ENCODE measurements at regions of chr5 and their contacts with region 1.

Region 1: DNA sequence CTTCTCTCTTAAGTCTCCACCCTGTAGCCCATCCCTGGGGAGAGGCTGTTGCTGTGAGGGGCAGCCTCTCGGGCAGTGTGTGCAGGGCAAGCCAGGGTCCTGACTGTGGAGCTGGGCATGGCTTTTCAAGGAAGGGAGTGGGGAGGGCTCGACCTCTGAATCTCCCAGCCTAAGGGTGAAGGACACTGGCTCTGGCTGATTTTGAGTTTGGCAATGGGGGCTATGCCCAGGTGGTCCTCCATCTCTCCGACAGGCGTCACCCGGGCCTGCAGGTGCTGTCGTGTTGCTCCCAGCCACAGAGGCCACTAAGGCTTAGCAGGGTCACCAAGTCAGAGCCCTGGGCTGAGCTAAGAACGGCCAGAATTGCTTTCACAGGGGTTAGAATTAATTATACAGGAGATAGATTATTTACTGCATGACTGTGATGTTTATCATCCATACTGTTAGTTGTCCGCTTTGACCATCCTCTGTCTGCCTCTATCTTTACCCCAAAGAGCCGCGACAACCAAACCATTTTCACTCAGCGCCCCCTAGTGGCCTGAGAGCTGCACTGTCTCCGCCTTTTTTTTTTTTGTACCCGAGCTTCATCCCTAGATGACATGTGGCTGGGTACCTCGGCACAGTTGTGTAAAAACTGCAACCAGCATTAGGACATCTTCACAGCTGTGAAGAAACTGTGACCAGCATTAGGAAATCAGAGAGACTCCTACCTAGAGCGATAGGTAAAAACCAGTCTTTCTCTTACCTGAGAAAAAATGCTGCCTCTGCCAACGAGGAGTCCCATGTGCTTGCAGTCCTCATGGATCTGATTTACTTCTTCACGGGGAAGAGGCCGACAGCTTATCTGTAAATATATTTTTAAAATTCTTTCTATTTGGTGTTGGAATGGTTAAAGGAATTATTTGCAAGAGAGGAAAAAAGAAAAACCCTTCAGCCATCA is 44.5 kb downstream of the AGXT2 start:
- DNase-seq: peak; percentile 69
- H3K4me3 Mint-ChIP-seq: no peak overlapping the region
- H3K27ac Mint-ChIP-seq: no peak overlapping the region
- H3K4me1 Mint-ChIP-seq: no peaks in the 10 kb centered on the region
- H3K27me3 Mint-ChIP-seq: peaks cover 29% of the 10 kb centered on the region

Region 2: DNA sequence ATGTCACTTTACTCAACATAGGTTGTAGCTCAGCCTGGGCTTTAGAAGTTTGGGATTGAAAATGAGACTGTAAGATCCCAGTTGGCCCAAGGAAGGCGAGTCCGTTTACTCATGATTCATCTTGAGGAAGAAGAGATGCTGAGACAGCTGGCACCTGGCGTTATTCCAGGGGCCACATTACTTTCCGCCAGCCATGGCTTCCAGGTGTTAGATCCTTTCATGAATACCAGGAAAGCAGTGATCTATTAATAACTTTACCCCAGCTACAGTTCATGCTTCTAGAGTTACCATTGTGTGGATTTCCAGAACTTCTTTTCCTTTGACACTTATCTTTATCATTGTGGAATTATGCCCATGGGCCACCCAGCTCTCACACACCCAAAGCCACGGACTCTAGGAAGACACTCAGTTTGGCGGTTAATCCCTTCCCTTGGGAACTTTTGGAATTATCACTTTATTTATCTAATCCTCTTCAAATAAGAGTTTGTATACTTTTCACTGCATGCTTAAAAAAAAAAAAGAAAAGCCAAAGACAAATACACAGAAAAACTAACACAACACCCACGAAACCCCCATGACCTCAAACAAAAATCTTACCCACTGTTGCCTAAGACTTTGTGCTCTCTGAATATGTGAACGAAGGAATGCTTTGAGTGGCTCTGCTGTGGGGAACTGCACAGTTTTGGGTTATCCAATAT is 320.2 kb before region 1 on chr5:
- CTCF ChIA-PET with region 1: no interaction called
- POLR2A ChIA-PET with region 1: no interaction called
- intact Hi-C with region 1: no loop called
- DNase-seq: no peak
- H3K4me3 Mint-ChIP-seq: no peak overlapping the region
- H3K27ac Mint-ChIP-seq: no peak overlapping the region
- H3K4me1 Mint-ChIP-seq: peaks cover 10% of the 10 kb centered on the region
- H3K27me3 Mint-ChIP-seq: peaks cover 4% of the 10 kb centered on the region

Region 3: GRCh38 chr5:34957857-34958690 is 45.2 kb before region 1 on chr5:
- CTCF ChIA-PET with region 1: interaction called, 52 read pairs
- POLR2A ChIA-PET with region 1: no interaction called
- intact Hi-C with region 1: loop called (anchors 1 kb)
- DNase-seq: no peak
- H3K4me3 Mint-ChIP-seq: no peak overlapping the region
- H3K27ac Mint-ChIP-seq: no peak overlapping the region
- H3K4me1 Mint-ChIP-seq: peaks cover 19% of the 10 kb centered on the region
- H3K27me3 Mint-ChIP-seq: no peaks in the 10 kb centered on the region

Region 4: DNA sequence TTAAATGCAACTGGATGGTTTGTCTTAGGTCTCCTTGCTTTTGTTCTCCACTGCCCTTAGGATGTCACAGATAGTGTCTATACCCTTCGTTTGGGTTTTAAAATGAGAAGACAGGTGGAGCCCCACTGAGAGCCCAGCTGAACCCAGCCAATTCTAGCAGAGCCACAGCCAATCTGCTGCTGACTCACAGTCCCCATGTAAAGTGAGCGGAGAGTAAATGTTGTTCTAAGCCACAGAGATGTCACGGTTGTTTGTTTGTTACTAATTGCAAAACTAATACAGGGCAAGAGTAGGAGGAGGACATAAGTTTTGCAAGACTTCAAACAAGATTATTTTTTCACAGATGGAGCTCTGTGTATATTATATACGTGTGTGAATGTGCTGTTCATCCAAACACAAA is 94.9 kb after region 1 on chr5:
- CTCF ChIA-PET with region 1: no interaction called
- POLR2A ChIA-PET with region 1: no interaction called
- intact Hi-C with region 1: no loop called
- DNase-seq: no peak
- H3K4me3 Mint-ChIP-seq: no peak overlapping the region
- H3K27ac Mint-ChIP-seq: no peak overlapping the region
- H3K4me1 Mint-ChIP-seq: no peaks in the 10 kb centered on the region
- H3K27me3 Mint-ChIP-seq: peaks cover 17% of the 10 kb centered on the region

Measured in activated CD4-positive, alpha-beta memory T cell treated with anti-CD3 and anti-CD28 coated beads for 36 hours (primary cell).